Lower leg skin (tissue), 4 donors: ENCODE measurements at regions of chr11 and their contacts with region 1.

Region 1: GRCh38 chr11:119739021-119739703 is 10.2 kb upstream of the NECTIN1 start:
- DNase-seq: no peak
- H3K4me3 ChIP-seq: no peak overlapping the region
- CTCF ChIP-seq: no peak
- POLR2A ChIP-seq: no peak

Region 2: DNA sequence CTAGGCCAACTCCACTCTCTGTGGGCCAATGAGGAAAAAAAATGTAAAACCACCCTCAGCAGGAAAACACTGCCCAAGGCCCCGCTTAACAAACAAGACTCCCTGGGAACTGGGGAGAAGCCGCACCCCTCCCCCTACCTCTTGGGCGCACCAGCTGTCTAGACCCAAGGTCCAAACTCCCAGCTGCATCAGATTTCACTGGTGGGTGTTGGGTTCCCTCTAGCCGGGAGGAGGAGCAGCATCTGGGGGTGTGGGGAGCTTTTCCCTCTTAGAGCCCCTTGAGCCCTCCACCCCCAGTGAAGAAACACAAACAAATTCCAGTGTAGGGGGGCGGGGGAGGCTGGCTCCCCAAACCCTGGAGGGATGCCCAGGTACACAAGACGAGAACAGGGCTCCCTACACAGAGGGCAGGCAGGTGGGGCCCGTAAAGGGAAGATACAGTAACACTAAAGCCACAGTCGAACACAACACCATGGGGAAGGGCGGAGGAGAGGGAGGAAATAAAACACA is 75.0 kb before region 1 on chr11:
- intact Hi-C with region 1: loop called (anchors 5 kb)
- DNase-seq: no peak
- H3K4me3 ChIP-seq: no peak overlapping the region
- CTCF ChIP-seq: no peak
- POLR2A ChIP-seq: no peak